Mammary epithelial cell (primary cell): ENCODE measurements at regions of chr12 and their contacts with region 1.

Region 1: GRCh38 chr12:17642340-17642650 is 447.7 kb downstream of the RERGL start:
- DNase-seq: no peak
- H3K4me3 ChIP-seq: no peak overlapping the region
- H3K27ac ChIP-seq: no peak overlapping the region
- H3K4me1 ChIP-seq: no peaks in the 10 kb centered on the region
- H3K27me3 ChIP-seq: no peaks in the 10 kb centered on the region
- CTCF ChIP-seq: no peak

Region 2: DNA sequence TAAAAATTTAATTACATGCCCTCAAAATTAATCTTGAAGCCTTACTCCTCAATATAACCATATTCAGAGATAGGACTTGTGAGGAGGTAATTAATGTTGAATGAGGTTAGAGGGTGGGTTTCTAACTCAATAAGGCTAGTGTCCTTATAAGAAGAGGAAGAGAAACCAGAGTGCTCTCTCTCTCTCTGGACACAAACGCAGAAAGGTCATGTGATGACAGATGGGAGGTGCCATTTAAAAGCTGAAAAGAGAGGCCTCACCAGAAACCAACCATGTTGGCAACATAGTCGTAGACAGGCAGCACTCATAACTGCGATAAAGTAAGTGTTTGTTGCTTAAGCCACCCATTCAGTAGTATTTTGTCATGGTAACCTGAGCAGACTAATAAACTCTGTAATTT is 657.8 kb before region 1 on chr12:
- CTCF ChIA-PET with region 1: no interaction called
- dilution Hi-C with region 1: no loop called
- in situ Hi-C with region 1: no loop called
- intact Hi-C with region 1: no loop called
- DNase-seq: no peak
- H3K4me3 ChIP-seq: no peak overlapping the region
- H3K27ac ChIP-seq: no peak overlapping the region
- H3K4me1 ChIP-seq: no peaks in the 10 kb centered on the region
- H3K27me3 ChIP-seq: no peaks in the 10 kb centered on the region
- CTCF ChIP-seq: no peak

Region 3: GRCh38 chr12:17609153-17609552 is 33.1 kb before region 1 on chr12:
- CTCF ChIA-PET with region 1: no interaction called
- dilution Hi-C with region 1: no loop called
- in situ Hi-C with region 1: no loop called
- intact Hi-C with region 1: no loop called
- DNase-seq: no peak
- H3K4me3 ChIP-seq: no peak overlapping the region
- H3K27ac ChIP-seq: no peak overlapping the region
- H3K4me1 ChIP-seq: no peaks in the 10 kb centered on the region
- H3K27me3 ChIP-seq: no peaks in the 10 kb centered on the region
- CTCF ChIP-seq: no peak

Region 4: GRCh38 chr12:17928708-17929366 is 286.5 kb after region 1 on chr12:
- CTCF ChIA-PET with region 1: no interaction called
- dilution Hi-C with region 1: no loop called
- in situ Hi-C with region 1: no loop called
- intact Hi-C with region 1: loop called (anchors 2 kb)
- DNase-seq: peak; percentile 79
- H3K4me3 ChIP-seq: no peak overlapping the region
- H3K27ac ChIP-seq: peak overlapping the region; percentile 31
- H3K4me1 ChIP-seq: peaks cover 9% of the 10 kb centered on the region
- H3K27me3 ChIP-seq: no peaks in the 10 kb centered on the region
- CTCF ChIP-seq: peak; percentile 48 to 58

Region 5: DNA sequence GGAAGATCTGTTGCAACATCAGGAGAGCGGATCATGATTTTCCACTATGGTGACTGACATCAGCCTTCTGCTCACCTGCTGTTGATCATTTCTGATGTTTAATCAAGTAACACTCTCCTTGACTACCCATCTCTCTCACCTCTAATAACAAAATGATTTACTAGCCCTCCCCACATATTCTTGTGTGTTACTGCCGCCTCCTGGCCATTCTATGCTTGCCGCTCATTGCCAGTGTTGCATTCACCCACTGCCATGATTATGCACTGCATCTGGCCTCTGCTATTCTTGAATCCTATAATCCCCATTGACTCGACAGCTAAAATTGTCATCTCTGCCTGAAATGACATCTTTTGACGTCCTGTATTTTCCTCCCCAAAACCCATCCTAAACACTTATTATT is 333.9 kb after region 1 on chr12:
- CTCF ChIA-PET with region 1: no interaction called
- dilution Hi-C with region 1: no loop called
- in situ Hi-C with region 1: no loop called
- intact Hi-C with region 1: no loop called
- DNase-seq: peak; percentile 17
- H3K4me3 ChIP-seq: no peak overlapping the region
- H3K27ac ChIP-seq: no peak overlapping the region
- H3K4me1 ChIP-seq: no peaks in the 10 kb centered on the region
- H3K27me3 ChIP-seq: no peaks in the 10 kb centered on the region
- CTCF ChIP-seq: peak; percentile 44 to 71

Region 6: GRCh38 chr12:18239526-18239925 is 597.2 kb after region 1 on chr12:
- CTCF ChIA-PET with region 1: no interaction called
- dilution Hi-C with region 1: no loop called
- in situ Hi-C with region 1: no loop called
- intact Hi-C with region 1: no loop called
- DNase-seq: peak; percentile 33
- H3K4me3 ChIP-seq: no peak overlapping the region
- H3K27ac ChIP-seq: no peak overlapping the region
- H3K4me1 ChIP-seq: no peaks in the 10 kb centered on the region
- H3K27me3 ChIP-seq: no peaks in the 10 kb centered on the region
- CTCF ChIP-seq: no peak